ENCODE measurements at regions of chr6 and their contacts with region 1.

Region 1: DNA sequence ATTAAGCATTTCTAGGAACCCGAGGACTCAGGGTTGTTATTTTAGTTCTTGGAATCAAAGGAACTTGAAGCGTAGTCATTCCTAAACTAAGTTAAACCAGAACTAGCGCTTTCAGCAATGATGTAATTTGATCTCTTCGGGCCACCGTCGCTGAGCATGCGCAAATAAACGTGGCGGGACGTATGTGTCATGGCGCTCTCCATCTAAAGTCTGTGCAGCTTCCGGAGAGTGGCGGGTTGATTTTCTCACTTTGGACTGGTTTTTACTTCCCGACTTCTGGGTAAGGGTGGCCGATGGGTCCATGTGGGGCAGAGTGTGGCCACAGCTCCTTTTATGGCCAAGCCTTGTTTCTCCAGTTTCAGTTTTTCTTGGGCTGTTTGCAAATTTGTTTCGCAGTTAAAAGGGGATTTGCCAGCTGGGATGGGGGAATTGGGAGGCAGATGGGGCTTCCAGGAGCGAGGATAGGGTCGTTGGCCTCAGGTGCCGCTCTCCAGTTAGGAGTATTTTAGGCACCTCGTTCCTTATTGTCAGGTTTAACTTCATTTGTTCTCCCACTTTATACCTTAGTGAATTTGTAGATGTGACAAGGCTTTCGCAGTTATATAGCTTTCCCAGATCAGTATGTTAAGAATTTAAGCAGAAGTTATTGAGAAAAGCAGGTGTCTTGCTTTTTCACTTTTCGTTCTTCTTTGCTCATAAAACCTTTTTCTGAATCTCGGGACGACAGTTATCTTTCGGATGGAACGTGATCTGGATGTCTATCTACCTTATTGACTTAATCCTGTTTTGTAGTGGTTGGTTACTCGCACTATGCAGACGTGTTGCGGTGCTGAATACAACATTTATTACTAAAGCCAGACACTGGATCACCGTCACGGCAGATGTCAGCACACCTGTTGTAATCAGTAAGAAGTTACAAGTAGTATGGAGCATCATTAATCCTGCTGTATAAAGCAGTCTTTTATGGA is at the start of gene CDKAL1:
- DNase-seq: peak; percentile 88 to 94 (median 92)
- ATAC-seq: peak; percentile 98
- H3K4me3 ChIP-seq: peak within 1 kb of the TSS; percentile 82 to 91
- H3K27ac ChIP-seq: peak within 1 kb of the TSS; percentile 46 to 91 (median 78)
- H3K4me1 ChIP-seq: peaks cover 8% of the 10 kb centered on the region
- H3K27me3 ChIP-seq: no peaks in the 10 kb centered on the region
- CTCF ChIP-seq: no peak
- POLR2A ChIP-seq: peak; percentile 61 to 87 (median 80)
- total RNA-seq, gene CDKAL1: 16.3 to 18.1 TPM

Region 2: GRCh38 chr6:20092071-20092566 is 442.5 kb before region 1 on chr6:
- intact Hi-C with region 1: loop called (anchors 10 kb)
- DNase-seq: peak in 1 of 4 donors; percentile 10
- ATAC-seq: no peak
- H3K4me3 ChIP-seq: no peak overlapping the region
- H3K27ac ChIP-seq: no peak overlapping the region
- H3K4me1 ChIP-seq: no peaks in the 10 kb centered on the region
- H3K27me3 ChIP-seq: no peaks in the 10 kb centered on the region
- CTCF ChIP-seq: peak; percentile 37 to 79 (median 71)
- POLR2A ChIP-seq: no peak

Region 3: DNA sequence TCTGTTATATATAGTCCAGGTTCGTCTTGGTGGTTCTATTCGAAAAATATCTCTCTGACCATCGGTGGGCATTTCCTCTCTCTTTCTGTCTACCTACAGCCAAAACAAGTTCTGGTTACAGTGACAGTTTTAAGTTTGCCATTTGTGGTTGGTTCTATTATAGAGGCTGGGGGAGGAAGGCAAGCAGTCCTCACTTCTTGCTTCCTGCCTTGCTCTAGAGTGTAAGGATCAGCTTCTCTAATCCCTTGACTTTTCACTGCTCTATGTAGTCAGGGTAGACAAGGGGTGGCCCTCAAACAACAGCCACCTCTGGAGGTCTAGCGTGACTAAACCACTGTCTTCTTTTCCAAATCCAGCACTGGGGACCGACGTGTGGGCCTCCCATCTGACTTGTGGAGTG is 116.8 kb before region 1 on chr6:
- intact Hi-C with region 1: no loop called
- DNase-seq: no peak
- ATAC-seq: no peak
- H3K4me3 ChIP-seq: no peak overlapping the region
- H3K27ac ChIP-seq: no peak overlapping the region
- H3K4me1 ChIP-seq: no peaks in the 10 kb centered on the region
- H3K27me3 ChIP-seq: no peaks in the 10 kb centered on the region
- CTCF ChIP-seq: no peak
- POLR2A ChIP-seq: no peak

Region 4: DNA sequence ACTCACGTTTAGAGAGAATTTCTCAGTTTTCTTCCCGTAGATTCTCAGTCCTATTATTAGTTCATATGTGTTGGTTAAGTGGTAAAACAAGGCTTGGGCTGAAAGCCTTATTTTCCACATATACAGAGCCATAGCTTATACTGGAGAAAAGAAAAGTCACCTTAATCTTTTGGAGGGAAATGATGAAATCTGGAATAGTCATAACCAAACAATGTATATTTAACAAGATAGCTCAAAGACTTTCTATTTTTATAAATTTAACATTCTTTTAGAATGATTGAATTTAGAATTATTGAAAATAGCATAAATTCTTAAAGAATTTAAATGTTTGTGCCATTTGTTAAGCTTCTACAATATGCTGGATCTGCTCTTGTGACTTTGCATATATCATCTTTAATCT is 85.5 kb after region 1 on chr6:
- intact Hi-C with region 1: no loop called
- DNase-seq: no peak
- ATAC-seq: no peak
- H3K4me3 ChIP-seq: no peak overlapping the region
- H3K27ac ChIP-seq: no peak overlapping the region
- H3K4me1 ChIP-seq: no peaks in the 10 kb centered on the region
- H3K27me3 ChIP-seq: no peaks in the 10 kb centered on the region
- CTCF ChIP-seq: no peak
- POLR2A ChIP-seq: no peak

Region 5: DNA sequence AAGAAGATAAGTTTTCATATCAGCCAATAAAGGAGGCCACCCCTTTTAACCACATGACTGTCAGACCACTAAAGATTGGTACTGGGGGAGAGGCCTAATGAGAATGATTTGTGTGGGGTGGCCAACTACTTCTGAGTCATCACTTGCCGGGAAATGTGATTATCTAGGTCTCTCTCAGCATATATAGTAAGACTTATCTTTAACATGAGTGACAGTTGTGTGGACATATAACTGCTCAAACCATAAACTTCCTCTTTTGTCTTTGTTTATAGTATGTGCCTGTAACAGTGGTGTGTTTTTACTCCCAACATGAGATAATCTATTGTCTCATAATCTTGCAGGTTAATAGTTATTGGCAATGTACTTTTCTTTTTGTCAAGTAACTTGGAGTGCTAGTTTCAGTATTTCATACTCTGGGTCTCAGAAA is 312.0 kb after region 1 on chr6:
- intact Hi-C with region 1: no loop called
- DNase-seq: no peak
- ATAC-seq: no peak
- H3K4me3 ChIP-seq: no peak overlapping the region
- H3K27ac ChIP-seq: no peak overlapping the region
- H3K4me1 ChIP-seq: no peaks in the 10 kb centered on the region
- H3K27me3 ChIP-seq: no peaks in the 10 kb centered on the region
- CTCF ChIP-seq: no peak
- POLR2A ChIP-seq: no peak

Measured in body of pancreas (tissue), 4 donors.